ENCODE measurements at regions of chr11 and their contacts with region 1.

Region 1: DNA sequence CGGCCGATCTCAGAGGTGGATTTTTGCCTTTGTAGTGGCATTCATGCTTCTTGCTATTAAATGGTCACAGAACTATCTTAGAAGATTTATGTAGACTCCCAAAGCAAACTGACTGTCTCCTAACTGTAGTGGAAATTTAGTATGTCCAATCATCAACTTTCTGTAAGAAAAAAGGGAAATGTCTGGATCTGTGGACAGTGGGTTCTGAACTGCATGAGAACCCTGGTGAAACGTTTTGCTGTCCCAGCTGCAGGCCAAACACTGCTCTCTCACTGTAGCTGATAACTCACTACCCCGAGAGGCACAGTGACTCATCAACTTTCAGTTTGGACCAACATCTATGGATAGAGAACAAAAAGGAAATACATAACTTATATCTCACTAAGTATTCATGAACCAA is 387.1 kb downstream of the SOX6 start:
- DNase-seq: peak; percentile 76 to 84
- ATAC-seq: peak; percentile 74 to 80
- H3K4me3 ChIP-seq: peak overlapping the region; percentile 30 to 47 (median 39)
- H3K27ac ChIP-seq: peak overlapping the region; percentile 84 to 95 (median 92)
- H3K4me1 ChIP-seq: peaks cover 39 to 44% of the 10 kb centered on the region in 2 donors
- H3K27me3 ChIP-seq: no peaks in the 10 kb centered on the region
- CTCF ChIP-seq: no peak
- POLR2A ChIP-seq: peak; percentile 68 to 78

Region 2: DNA sequence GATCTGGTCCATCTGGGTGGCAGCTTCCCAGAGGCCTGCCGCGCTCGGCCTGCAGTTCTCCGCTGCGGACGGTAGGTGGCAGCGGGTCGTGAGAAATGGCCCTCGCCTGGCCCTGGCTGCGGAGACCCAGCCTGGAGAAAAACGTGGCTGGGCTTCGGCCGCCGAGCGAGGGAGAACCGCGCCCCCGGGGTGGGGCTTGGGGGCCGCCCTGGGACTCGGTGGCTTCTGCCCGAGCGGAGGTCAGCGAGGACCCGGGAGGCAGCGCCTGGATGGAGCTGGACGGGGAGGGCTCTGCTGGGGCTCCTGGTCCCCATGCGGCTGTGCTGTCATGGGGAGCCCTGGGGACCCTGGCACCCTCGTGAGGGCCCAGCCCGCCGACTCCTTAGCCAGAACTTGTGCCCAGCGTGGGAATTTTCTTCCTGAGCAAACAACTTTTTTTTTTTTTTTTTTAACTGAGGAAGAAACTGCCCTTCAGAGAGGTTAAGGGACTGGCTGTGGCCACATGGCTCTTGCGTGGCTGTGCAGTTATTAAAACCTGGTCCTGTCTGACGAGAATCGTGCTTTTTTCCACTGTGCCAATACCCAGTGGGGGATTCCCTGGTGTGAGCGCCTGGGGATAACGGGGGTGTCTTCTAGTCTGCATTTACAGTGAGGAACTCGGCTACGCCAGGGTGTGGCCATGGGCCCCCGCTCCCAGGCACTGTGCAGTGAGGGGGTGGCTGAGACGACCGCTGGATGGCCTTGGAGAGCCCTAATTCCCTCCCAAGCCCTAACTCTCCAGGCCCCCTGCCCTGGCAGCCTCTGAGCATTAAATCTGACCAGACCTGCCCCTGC is 319.0 kb before region 1 on chr11:
- in situ Hi-C with region 1: no loop called
- intact Hi-C with region 1: loop called (anchors 10 kb)
- DNase-seq: peak; percentile 79 to 83
- ATAC-seq: peak; percentile 92
- H3K4me3 ChIP-seq: peak overlapping the region; percentile 44 to 56 (median 50)
- H3K27ac ChIP-seq: peak overlapping the region; percentile 50 to 72 (median 61)
- H3K4me1 ChIP-seq: peaks cover 9 to 23% of the 10 kb centered on the region in 2 donors
- H3K27me3 ChIP-seq: no peaks in the 10 kb centered on the region
- CTCF ChIP-seq: peak; percentile 91 to 98 (median 96)
- POLR2A ChIP-seq: no peak

Region 3: DNA sequence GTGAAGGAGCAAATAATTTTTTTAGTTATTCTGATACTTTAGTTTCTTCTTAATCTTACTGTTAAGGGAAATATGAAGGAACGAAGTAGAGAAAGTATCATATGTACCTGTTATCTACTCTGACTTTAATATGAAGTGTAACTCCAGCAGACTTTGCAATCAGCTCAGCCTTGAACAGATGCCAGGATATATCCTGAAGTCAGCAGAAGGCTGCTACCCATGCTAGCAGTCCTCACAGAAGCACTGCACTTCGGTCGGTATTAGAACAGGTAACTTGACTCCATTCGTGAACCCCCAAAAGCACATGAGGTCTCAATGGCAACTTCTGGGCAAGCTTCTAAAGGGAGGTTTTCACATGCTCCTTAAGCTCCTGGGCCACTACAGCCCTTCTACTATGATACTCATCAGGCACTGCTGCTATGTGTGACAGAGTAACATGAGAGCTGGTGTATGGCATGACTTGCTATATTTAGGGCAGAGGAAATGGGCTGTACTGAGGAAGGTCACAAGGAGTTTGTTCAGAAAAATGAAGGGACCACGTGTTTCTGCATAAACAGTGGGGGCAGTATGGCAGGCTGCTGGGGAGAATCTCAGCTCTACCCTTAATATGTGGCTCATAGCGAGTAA is 43.0 kb after region 1 on chr11:
- in situ Hi-C with region 1: no loop called
- intact Hi-C with region 1: loop called (anchors 2 kb)
- DNase-seq: peak; percentile 59 to 72
- ATAC-seq: peak; percentile 96
- H3K4me3 ChIP-seq: no peak overlapping the region
- H3K27ac ChIP-seq: peak overlapping the region; percentile 78 to 83 (median 80)
- H3K4me1 ChIP-seq: peaks cover 49 to 51% of the 10 kb centered on the region in 2 donors
- H3K27me3 ChIP-seq: no peaks in the 10 kb centered on the region
- CTCF ChIP-seq: no peak
- POLR2A ChIP-seq: peak; percentile 41 to 74

Region 4: DNA sequence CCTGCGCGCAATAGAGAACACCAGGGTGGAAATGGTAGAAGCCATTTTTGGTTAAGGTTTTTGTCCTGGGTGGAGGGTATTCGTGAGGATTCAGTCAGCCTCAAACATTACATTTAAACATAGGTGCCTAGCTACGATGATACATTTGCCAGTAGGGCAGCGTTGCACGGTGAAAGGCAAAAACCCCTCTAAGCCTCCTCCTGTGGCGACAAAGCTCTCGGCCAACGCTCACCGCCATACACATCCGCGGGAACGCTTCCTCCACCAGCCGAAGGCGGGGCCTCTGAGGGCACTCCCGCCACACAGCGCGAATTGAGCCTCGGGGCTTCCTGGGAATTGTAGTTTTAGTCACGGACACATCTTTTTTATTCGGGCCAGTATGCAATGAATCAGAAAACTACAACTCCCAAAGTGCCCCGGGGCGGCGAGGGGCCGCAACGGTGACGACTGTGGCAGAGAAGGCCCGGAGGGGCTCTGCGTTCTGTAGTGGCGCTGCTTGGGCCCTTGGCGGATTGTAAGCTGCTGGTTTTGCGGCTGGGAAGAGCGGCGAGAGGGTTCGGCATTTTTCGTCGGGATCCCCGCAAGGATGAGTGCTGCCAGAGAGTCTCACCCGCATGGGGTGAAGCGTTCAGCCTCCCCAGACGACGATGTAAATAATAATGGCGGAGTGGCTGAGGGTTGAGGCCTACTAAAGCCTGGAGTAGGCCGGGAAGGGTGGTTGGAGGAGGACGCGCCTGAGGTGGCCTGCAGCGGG is 769.1 kb after region 1 on chr11 and contains the start of gene C11orf58:
- in situ Hi-C with region 1: no loop called
- intact Hi-C with region 1: loop called (anchors 2 kb)
- DNase-seq: peak; percentile 94 to 97
- ATAC-seq: peak; percentile 97 to 98
- H3K4me3 ChIP-seq: peak within 1 kb of the TSS; percentile 78 to 91 (median 87)
- H3K27ac ChIP-seq: peak within 1 kb of the TSS; percentile 94 to 97 (median 94)
- H3K4me1 ChIP-seq: peaks cover 37 to 41% of the 10 kb centered on the region in 2 donors
- H3K27me3 ChIP-seq: no peaks in the 10 kb centered on the region
- CTCF ChIP-seq: peak in 1 of 5 experiments; percentile 13
- POLR2A ChIP-seq: peak; percentile 94 to 95
- total RNA-seq, gene C11orf58: 103 to 170 (median 134) TPM

Region 5: GRCh38 chr11:16785520-16786128 is 816.3 kb after region 1 on chr11:
- in situ Hi-C with region 1: no loop called
- intact Hi-C with region 1: no loop called
- DNase-seq: peak; percentile 46 to 56
- ATAC-seq: peak; percentile 78
- H3K4me3 ChIP-seq: no peak overlapping the region
- H3K27ac ChIP-seq: no peak overlapping the region
- H3K4me1 ChIP-seq: peaks cover 3% of the 10 kb centered on the region in 2 donors
- H3K27me3 ChIP-seq: no peaks in the 10 kb centered on the region
- CTCF ChIP-seq: peak; percentile 62 to 85 (median 75)
- POLR2A ChIP-seq: no peak

Region 6: GRCh38 chr11:17703951-17704350 is 1734.7 kb after region 1 on chr11:
- in situ Hi-C with region 1: no loop called
- intact Hi-C with region 1: loop called (anchors 5 kb)
- DNase-seq: no peak
- ATAC-seq: peak in 1 of 2 donors; percentile 9
- H3K4me3 ChIP-seq: no peak overlapping the region
- H3K27ac ChIP-seq: no peak overlapping the region
- H3K4me1 ChIP-seq: peaks cover 23 to 31% of the 10 kb centered on the region in 2 donors
- H3K27me3 ChIP-seq: no peaks in the 10 kb centered on the region
- CTCF ChIP-seq: no peak
- POLR2A ChIP-seq: no peak